ENCODE measurements at regions of chr2 and their contacts with region 1.

Region 1: GRCh38 chr2:33529771-33530351 is 53.4 kb downstream of the RASGRP3 start:
- DNase-seq: peak; percentile 98
- ATAC-seq: peak; percentile 97
- H3K4me3 ChIP-seq: no peak overlapping the region
- H3K27ac ChIP-seq: peak overlapping the region; percentile 85
- H3K4me1 ChIP-seq: peaks cover 11% of the 10 kb centered on the region
- H3K27me3 ChIP-seq: no peaks in the 10 kb centered on the region
- CTCF ChIP-seq: peak; percentile 24; the same call in 1 of the 2 replicates
- POLR2A ChIP-seq: no peak
- RAD21 ChIP-seq: peak; percentile 28; the same call in 1 of the 2 replicates

Region 2: DNA sequence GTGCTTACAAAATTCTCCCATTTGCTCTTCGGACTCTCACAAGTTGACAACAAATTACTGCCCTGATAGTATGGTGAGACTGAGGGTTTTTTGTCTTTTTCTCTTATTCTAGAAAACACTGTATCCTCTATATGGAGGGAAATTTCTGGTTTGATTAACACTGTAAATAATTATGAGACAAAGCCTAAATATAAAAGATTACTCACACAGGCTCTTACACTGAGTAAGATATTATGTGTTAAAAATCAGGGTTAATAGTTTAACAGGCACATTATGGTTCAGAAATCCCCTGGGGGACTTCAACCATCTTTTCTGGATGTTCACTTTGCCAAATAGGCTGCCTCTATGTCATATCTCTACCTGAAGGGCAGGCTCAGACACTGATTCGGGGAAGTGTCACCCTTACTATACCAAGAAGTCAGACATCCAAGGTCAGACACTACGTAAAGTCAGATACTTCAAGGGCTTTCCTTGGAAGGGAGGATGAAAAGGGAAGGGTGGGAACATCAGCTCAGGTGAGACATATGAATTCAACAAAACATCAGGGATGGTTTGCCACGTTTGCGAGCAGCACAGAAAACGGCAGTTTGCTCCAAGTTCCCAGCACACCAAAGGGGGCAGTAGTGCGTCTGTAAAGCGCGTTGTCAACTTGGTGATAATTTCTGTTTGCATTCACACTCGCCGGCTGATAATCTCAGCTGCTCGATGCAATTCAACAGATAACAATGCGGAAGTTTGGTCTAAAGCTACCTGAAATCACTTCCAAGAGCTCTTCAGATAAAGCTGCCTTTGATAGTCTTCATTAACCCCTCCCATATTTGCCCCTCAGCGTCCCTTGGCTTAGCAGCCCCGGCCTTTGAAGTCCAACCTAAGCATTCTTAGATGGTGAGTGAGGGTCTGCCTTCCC is 54.4 kb before region 1 on chr2:
- CTCF ChIA-PET with region 1: no interaction called
- POLR2A ChIA-PET with region 1: no interaction called
- dilution Hi-C with region 1: no loop called
- in situ Hi-C with region 1: no loop called
- intact Hi-C with region 1: loop called (anchors 2 kb)
- DNase-seq: peak; percentile 83
- ATAC-seq: peak; percentile 79
- H3K4me3 ChIP-seq: peak overlapping the region; percentile 52
- H3K27ac ChIP-seq: peak overlapping the region; percentile 42
- H3K4me1 ChIP-seq: peaks cover 2% of the 10 kb centered on the region
- H3K27me3 ChIP-seq: no peaks in the 10 kb centered on the region
- CTCF ChIP-seq: peak; percentile 78
- POLR2A ChIP-seq: no peak
- RAD21 ChIP-seq: peak; percentile 63

Region 3: GRCh38 chr2:33614190-33614589 is 84.3 kb after region 1 on chr2:
- CTCF ChIA-PET with region 1: no interaction called
- POLR2A ChIA-PET with region 1: interaction called, 10 read pairs
- dilution Hi-C with region 1: no loop called
- in situ Hi-C with region 1: no loop called
- intact Hi-C with region 1: no loop called
- DNase-seq: no peak
- ATAC-seq: no peak
- H3K4me3 ChIP-seq: no peak overlapping the region
- H3K27ac ChIP-seq: no peak overlapping the region
- H3K4me1 ChIP-seq: no peaks in the 10 kb centered on the region
- H3K27me3 ChIP-seq: peaks cover 3% of the 10 kb centered on the region; the same call in 1 of the 2 replicates
- CTCF ChIP-seq: no peak
- POLR2A ChIP-seq: no peak
- RAD21 ChIP-seq: no peak